Activated T-helper 2 cell treated with anti-CD3 and anti-CD28 coated beads, Interferon-gamma antibody, Interleukin-2, Interleukin-4, amounts not matched to agents 10 μg/mL and 5 μg/mL and 100 μg/mL, durations not matched to agents 14 hours and 24 hours and 36 hours (primary cell): ENCODE measurements at regions of chr10 and their contacts with region 1.

Region 1: GRCh38 chr10:101012525-101013364 is 13.1 kb downstream of the LZTS2 start:
- DNase-seq: peak; percentile 68
- H3K4me3 Mint-ChIP-seq: no peak overlapping the region
- H3K27ac Mint-ChIP-seq: peak overlapping the region; percentile 6
- H3K4me1 Mint-ChIP-seq: peaks cover 23% of the 10 kb centered on the region
- H3K27me3 Mint-ChIP-seq: peaks cover 20% of the 10 kb centered on the region

Region 2: GRCh38 chr10:100969187-100970075 is 43.3 kb before region 1 on chr10 and contains the start of gene SEMA4G:
- intact Hi-C with region 1: loop called (anchors 5 kb)
- DNase-seq: no peak
- H3K4me3 Mint-ChIP-seq: peak within 1 kb of the TSS; percentile 70
- H3K27ac Mint-ChIP-seq: no peak within 1 kb of the TSS
- H3K4me1 Mint-ChIP-seq: peaks cover 2% of the 10 kb centered on the region
- H3K27me3 Mint-ChIP-seq: no peaks in the 10 kb centered on the region
- total RNA-seq, gene SEMA4G: 1.3 and 1.6 TPM in 2 replicates

Region 3: GRCh38 chr10:101031128-101031795 is 18.5 kb after region 1 on chr10 and contains the starts of genes PDZD7 and SFXN3:
- intact Hi-C with region 1: loop called (anchors 2 kb)
- DNase-seq: peak; percentile 94
- H3K4me3 Mint-ChIP-seq: peak within 1 kb of the TSS; percentile 85
- H3K27ac Mint-ChIP-seq: peak within 1 kb of the TSS; percentile 94
- H3K4me1 Mint-ChIP-seq: peaks cover 15% of the 10 kb centered on the region
- H3K27me3 Mint-ChIP-seq: peaks cover 21% of the 10 kb centered on the region
- total RNA-seq, gene PDZD7: 0.53 and 0.64 TPM in 2 replicates
- total RNA-seq, gene SFXN3: 41.3 and 44.3 TPM in 2 replicates